Aorta (tissue), 5 donors: ENCODE measurements at regions of chr19 and their contacts with region 1.

Region 1: DNA sequence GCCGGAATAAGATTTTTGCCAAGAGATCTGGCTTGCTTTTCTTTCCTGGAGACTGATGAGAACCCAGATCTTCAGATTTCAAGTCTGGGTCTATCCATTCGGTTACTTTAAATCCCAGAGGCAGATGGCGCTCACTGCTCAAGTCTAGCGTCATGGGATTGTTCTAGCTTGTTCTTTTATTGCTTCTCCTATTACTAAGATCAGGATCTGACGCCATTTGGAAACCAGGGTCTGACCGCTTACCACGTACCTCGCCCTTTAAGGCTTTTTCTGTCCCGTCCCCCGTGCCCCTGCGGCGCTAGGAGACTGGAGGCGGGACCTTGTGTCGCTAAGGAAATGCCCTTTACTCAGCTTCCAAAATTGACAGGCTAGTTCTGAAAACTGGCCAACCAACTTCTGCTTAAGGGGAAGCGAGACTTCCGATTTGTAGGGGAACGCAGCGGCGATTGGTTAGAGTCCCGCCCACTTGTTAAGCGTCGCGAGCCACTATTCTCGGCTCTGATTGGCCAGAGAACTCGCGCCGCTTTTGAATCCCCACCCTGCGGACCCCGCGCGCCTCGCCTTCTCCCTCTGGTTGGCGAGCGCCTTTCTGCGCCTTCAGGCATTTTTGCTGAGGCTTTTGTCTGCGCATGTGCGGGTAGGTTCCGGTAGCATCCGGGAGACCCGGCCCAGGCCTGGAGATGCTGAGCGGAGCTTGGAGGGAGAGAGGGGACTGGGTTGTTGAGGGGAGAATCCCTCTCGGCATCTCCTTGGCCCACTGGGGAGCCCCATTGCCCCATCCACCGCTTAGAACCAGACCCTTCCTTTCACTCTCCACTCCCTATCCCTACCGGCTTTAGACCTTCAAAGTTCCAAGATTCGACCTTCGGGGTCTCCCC is 3.8 kb upstream of the C19orf84 start:
- DNase-seq: peak; percentile 95 to 96
- ATAC-seq: peak; percentile 96
- H3K4me3 ChIP-seq: peak overlapping the region; percentile 13 to 30
- H3K27ac ChIP-seq: peak overlapping the region in 1 of 2 donors; percentile 7
- H3K4me1 ChIP-seq: no peaks in the 10 kb centered on the region
- H3K27me3 ChIP-seq: no peaks in the 10 kb centered on the region

Region 2: GRCh38 chr19:51367565-51368365 is 26.4 kb before region 1 on chr19:
- intact Hi-C with region 1: loop called in 1 of 2 experiments (anchors 1 kb)
- DNase-seq: peak; percentile 100
- ATAC-seq: peak; percentile 96
- H3K4me3 ChIP-seq: peak overlapping the region; percentile 4 to 65
- H3K27ac ChIP-seq: peak overlapping the region in 1 of 2 donors; percentile 4
- H3K4me1 ChIP-seq: no peaks in the 10 kb centered on the region
- H3K27me3 ChIP-seq: no peaks in the 10 kb centered on the region

Region 3: GRCh38 chr19:51564791-51565190 is 170.6 kb after region 1 on chr19:
- intact Hi-C with region 1: no loop called
- DNase-seq: no peak
- ATAC-seq: no peak
- H3K4me3 ChIP-seq: no peak overlapping the region
- H3K27ac ChIP-seq: no peak overlapping the region
- H3K4me1 ChIP-seq: no peaks in the 10 kb centered on the region
- H3K27me3 ChIP-seq: no peaks in the 10 kb centered on the region